Cardiac septum (tissue), 1 donor: ENCODE measurements at regions of chr17 and their contacts with region 1.

Region 1: GRCh38 chr17:7915611-7916382 is at the start of gene RNF227:
- DNase-seq: peak; percentile 94
- total RNA-seq, gene RNF227: 1.00 TPM

Region 2: GRCh38 chr17:7887482-7888183 is 28.2 kb before region 1 on chr17:
- intact Hi-C with region 1: loop called (anchors 1 kb)
- DNase-seq: peak; percentile 95

Region 3: GRCh38 chr17:7931709-7932482 is 16.1 kb after region 1 on chr17 and contains the starts of genes CNTROB and TRAPPC1:
- intact Hi-C with region 1: loop called (anchors 2 kb)
- DNase-seq: peak; percentile 100
- total RNA-seq, gene CNTROB: 12.0 TPM
- total RNA-seq, gene TRAPPC1: 114 TPM

Region 4: DNA sequence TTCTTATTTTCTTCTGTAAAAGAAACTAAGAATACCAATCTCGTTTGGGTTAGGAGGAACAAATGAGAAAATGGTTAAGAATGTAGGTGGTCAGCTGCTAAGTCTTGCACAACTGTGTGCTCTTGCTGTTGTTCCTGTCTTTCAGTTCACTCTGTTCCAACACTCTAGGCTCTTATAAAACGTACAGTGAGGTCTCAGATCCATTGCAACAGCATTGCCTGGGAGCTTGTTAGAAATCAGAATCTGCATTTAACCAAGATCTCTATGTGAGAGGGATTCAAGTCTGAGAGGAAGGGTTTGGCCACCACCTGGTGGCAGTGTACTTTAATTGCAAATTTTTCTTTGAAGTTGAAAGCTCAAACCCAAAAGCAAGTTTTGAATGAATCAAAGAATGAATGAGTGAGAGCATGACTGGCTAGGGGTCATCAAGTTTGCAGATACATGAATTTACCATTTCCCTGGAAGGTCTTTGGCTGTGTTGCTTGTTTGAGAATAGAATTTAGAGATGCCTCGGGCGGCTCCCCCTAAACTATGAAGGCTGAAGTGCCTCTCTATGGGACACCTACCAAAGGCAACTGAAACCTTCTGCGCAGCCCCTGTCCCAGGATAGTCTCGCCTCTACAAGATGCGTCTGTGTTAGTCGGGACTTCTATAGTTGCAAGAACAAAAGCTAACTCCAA is 125.6 kb after region 1 on chr17:
- intact Hi-C with region 1: loop called (anchors 2 kb)
- DNase-seq: no peak